SK-N-SH (cell line): ENCODE measurements at regions of chr4 and their contacts with region 1.

Region 1: DNA sequence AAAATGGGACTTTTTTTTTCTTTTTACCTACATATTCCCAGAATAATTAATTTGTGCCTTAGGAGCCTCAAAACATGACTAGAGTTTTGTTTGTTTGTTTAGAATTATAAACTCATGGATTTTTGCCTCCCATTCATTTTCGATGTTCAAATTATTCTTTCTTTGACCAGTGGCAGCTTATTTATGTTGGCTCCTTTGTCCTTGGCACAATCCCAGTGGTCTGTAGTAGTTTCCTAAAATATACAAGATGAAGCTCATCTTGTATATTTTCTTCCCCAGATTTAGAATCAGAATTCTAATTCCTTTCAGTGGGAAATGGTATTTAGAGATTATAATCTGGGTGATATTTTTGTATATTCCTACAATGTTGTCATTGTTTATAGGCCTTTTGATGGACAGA is 27.2 kb downstream of the DCK start:
- DNase-seq: no peak
- H3K4me3 ChIP-seq: no peak overlapping the region
- H3K27ac ChIP-seq: no peak overlapping the region
- H3K4me1 ChIP-seq: peaks cover 0 to 5% of the 10 kb centered on the region in 2 experiments; a peak in 2 of 4 replicates
- H3K27me3 ChIP-seq: no peaks in the 10 kb centered on the region
- CTCF ChIP-seq: no peak
- EP300 ChIP-seq: no peak
- RAD21 ChIP-seq: no peak

Region 2: GRCh38 chr4:70589785-70590184 is 430.8 kb before region 1 on chr4:
- CTCF ChIA-PET with region 1: no interaction called
- POLR2A ChIA-PET with region 1: no interaction called
- DNase-seq: no peak
- H3K4me3 ChIP-seq: no peak overlapping the region
- H3K27ac ChIP-seq: no peak overlapping the region
- H3K4me1 ChIP-seq: no peaks in the 10 kb centered on the region
- H3K27me3 ChIP-seq: peaks cover 8% of the 10 kb centered on the region
- CTCF ChIP-seq: no peak
- EP300 ChIP-seq: no peak
- RAD21 ChIP-seq: no peak

Region 3: DNA sequence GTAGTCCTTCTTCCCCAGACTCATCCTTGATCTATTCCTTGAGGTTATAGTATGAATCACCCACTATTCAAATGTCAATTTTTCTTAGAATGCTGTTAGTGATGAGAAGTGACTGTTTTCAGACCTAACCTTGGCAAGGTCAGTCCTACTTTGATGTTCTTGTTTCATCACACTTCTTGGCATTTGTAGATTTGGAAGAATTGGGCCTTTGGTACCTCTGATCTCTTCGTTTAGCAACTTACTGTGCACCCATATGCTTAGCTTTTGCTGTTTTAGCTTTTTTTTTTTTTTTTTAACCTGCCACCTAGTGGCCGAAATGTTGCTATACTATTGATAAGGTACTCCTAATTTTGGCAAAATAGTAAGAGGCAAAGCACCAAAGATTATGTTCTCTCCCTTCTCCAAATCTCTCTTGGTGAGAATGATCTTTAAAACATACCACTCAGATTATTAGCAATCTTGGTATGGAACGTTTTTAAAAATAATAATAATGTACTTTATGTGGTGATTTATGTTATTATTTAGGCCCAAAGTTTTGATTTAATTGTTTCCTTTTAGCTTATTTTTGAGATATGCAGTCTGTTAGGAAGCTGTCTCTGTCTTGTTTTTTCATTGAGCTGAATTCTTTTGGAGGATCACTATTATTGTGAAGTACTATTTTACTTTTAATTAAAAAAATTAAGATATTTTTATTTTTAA is 10.6 kb before region 1 on chr4:
- CTCF ChIA-PET with region 1: interaction called, 10 read pairs
- POLR2A ChIA-PET with region 1: no interaction called
- DNase-seq: peak; percentile 49
- H3K4me3 ChIP-seq: no peak overlapping the region; a peak in 1 of 4 replicates
- H3K27ac ChIP-seq: peak overlapping the region; percentile 40 to 44
- H3K4me1 ChIP-seq: peaks cover 4 to 13% of the 10 kb centered on the region in 2 experiments; a peak in 2 of 4 replicates
- H3K27me3 ChIP-seq: no peaks in the 10 kb centered on the region
- CTCF ChIP-seq: peak; percentile 85
- EP300 ChIP-seq: no peak
- RAD21 ChIP-seq: peak; percentile 57